ENCODE measurements at regions of chr2 and their contacts with region 1.

Region 1: GRCh38 chr2:172113617-172114016 is 10.9 kb upstream of the DLX2 start:
- DNase-seq: no peak
- ATAC-seq: no peak
- H3K4me3 ChIP-seq: no peak overlapping the region
- H3K27ac ChIP-seq: no peak overlapping the region
- H3K4me1 ChIP-seq: no peaks in the 10 kb centered on the region
- H3K27me3 ChIP-seq: peaks cover 11 to 58% of the 10 kb centered on the region in 2 donors
- CTCF ChIP-seq: peak in 1 of 2 donors; percentile 30

Region 2: DNA sequence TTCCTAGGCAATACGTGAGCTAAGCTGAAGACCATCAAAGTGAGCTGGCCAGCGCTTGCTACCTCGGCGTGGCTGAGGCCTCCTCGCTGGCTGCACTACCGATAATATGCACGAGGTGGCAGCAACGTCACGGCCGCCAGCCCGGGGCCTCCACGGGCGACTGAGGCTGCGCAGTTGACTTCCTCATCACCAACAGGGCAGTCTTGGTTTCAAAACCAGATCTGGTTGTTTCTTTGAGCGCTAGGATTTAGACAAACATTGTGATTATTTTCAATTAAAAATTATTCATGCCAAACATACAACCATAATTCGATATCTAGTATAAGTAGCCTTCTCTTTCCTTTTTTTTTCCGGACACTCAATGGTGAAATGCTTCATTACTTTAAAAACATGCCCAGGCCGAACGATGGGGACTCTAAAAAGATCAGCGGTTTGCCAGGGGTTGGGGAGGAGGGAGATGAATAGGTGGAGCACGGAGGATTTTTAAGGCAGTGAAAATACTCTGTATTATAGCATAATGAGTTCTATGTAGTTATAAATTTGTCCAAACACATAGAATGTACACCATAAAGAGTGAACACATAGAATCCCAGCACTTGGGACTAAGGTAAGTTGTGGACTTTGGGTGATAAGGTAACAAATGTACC is 539.3 kb before region 1 on chr2:
- intact Hi-C with region 1: loop called in 1 of 2 experiments (anchors 10 kb)
- DNase-seq: peak; percentile 69 to 96 (median 83)
- ATAC-seq: peak; percentile 100
- H3K4me3 ChIP-seq: no peak overlapping the region
- H3K27ac ChIP-seq: no peak overlapping the region
- H3K4me1 ChIP-seq: no peaks in the 10 kb centered on the region
- H3K27me3 ChIP-seq: no peaks in the 10 kb centered on the region
- CTCF ChIP-seq: peak; percentile 97

Measured in left lung (tissue), 14 donors.